ENCODE measurements at regions of chr12 and their contacts with region 1.

Region 1: DNA sequence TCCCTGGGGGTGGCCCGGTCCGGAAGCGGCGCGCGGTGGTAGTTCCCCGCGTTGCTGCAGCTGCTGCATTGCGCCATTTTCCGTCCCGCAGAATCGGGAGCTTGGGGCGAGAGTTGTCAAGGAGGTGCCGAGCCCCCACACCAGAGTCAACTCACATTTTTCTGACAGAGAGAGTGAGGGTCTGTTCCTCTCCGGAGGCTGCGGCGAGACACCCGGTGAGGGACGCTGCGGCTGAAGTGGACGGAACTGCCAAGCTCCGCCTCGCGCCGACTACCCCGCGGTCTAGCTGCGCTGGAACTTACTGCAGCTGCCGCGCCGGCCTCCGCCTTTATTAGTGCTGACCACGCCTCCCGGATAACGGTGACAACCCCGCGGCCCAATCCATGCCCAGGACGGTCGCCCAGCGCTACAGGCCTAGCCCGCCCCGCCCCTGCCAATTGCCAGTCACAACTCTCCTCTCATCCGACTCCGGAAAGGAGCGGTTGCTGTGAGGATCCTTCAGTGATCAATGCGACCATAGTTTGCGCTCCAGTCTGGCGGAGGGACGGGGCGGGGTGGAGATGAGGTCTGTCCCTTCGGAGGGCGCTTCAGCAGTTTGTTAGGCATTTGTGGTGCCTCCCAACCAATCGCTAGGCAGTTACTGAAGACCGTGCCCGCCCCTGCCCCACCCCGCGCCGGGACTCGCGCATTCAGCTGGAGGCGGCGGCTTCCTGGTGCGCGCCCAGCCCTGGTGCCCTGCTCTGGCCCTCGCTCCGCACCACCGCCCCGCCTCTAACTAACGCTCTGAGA is at the start of gene VAMP1:
- DNase-seq: peak; percentile 96
- H3K4me3 ChIP-seq: peak within 1 kb of the TSS; percentile 86
- H3K27ac ChIP-seq: peak within 1 kb of the TSS; percentile 62
- H3K4me1 ChIP-seq: peaks cover 32% of the 10 kb centered on the region
- CTCF ChIP-seq: no peak; the same call in 1 of the 2 replicates
- total RNA-seq, gene VAMP1: 82.7 and 86.0 TPM in 2 replicates

Region 2: GRCh38 chr12:6423267-6424007 is 47.1 kb before region 1 on chr12:
- CTCF ChIA-PET with region 1: interaction called, 34 read pairs
- POLR2A ChIA-PET with region 1: interaction called, 27 read pairs
- intact Hi-C with region 1: loop called (anchors 1 kb)
- DNase-seq: peak; percentile 92
- H3K4me3 ChIP-seq: no peak overlapping the region
- H3K27ac ChIP-seq: peak overlapping the region; percentile 1
- H3K4me1 ChIP-seq: peaks cover 53% of the 10 kb centered on the region
- CTCF ChIP-seq: peak; percentile 93

Region 3: GRCh38 chr12:6443361-6443983 is 27.1 kb before region 1 on chr12:
- CTCF ChIA-PET with region 1: interaction called, 4 read pairs
- POLR2A ChIA-PET with region 1: interaction called, 11 read pairs
- intact Hi-C with region 1: no loop called
- DNase-seq: peak; percentile 85
- H3K4me3 ChIP-seq: peak overlapping the region; percentile 41
- H3K27ac ChIP-seq: peak overlapping the region; percentile 96
- H3K4me1 ChIP-seq: peaks cover 73% of the 10 kb centered on the region
- CTCF ChIP-seq: no peak

Region 4: DNA sequence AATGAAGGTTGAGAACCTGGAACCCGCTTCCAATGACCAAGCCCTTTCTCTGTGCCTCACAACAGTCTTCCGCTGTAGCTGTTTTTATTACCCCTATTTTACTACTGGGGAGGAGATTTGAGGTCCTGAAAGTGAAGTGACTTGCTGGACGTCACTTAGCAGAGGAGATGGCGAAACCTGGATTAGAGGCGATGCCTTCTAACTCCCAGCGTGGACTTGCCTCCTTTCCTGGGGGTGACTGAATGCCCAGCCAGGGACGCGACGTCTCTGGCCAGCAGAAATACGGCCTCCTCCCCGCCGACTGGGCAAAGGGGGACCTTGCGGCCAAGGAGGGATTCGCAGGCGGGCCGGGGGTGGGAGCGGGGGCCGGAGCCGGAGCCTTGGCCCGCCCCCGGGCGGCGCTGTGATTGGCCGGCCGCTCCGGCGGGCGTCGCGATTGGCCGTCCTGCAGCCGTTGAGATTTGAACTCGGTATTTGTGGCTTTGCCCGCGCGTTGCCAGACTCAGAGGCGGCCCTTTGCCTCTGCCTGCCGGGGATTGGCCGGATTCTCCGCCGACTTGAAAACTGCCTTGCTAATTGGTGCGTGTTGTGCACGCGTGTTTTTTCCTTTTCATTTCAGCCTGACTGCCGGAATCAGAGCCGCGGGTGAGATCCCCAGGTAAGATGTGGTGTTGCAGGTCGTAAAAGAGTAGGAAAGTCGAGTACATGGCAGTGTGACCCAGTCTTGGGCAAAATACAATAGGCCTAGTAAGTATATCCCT is 23.1 kb after region 1 on chr12 and contains the start of gene NCAPD2:
- CTCF ChIA-PET with region 1: interaction called, 3 read pairs
- POLR2A ChIA-PET with region 1: interaction called, 24 read pairs
- intact Hi-C with region 1: loop called (anchors 1 kb)
- DNase-seq: peak; percentile 98
- H3K4me3 ChIP-seq: peak within 1 kb of the TSS; percentile 91
- H3K27ac ChIP-seq: peak within 1 kb of the TSS; percentile 96
- H3K4me1 ChIP-seq: peaks cover 37% of the 10 kb centered on the region
- CTCF ChIP-seq: peak; percentile 40; the same call in 1 of the 2 replicates
- total RNA-seq, gene NCAPD2: 157 and 195 TPM in 2 replicates

Measured in OCI-LY7 (cell line).